Pancreas (tissue), 10 donors: ENCODE measurements at regions of chr13 and their contacts with region 1.

Region 1: GRCh38 chr13:30581582-30581981 is 36.1 kb upstream of the USPL1 start:
- DNase-seq: no peak
- ATAC-seq: peak; percentile 11 to 53 (median 34)
- H3K4me3 ChIP-seq: no peak overlapping the region
- H3K27ac ChIP-seq: no peak overlapping the region
- H3K4me1 ChIP-seq: peaks cover 4 to 12% (median 8%) of the 10 kb centered on the region in 3 donors
- H3K27me3 ChIP-seq: no peaks in the 10 kb centered on the region
- CTCF ChIP-seq: no peak

Region 2: GRCh38 chr13:30125422-30126073 is 456.0 kb before region 1 on chr13:
- intact Hi-C with region 1: loop called in 1 of 3 experiments (anchors 10 kb)
- DNase-seq: no peak
- ATAC-seq: peak in 3 of 4 donors; percentile 76 to 78 (median 77)
- H3K4me3 ChIP-seq: no peak overlapping the region
- H3K27ac ChIP-seq: no peak overlapping the region
- H3K4me1 ChIP-seq: no peaks in the 10 kb centered on the region
- H3K27me3 ChIP-seq: no peaks in the 10 kb centered on the region
- CTCF ChIP-seq: no peak

Region 3: GRCh38 chr13:32153056-32153455 is 1571.5 kb after region 1 on chr13:
- intact Hi-C with region 1: no loop called
- DNase-seq: no peak
- ATAC-seq: no peak
- H3K4me3 ChIP-seq: no peak overlapping the region
- H3K27ac ChIP-seq: no peak overlapping the region
- H3K4me1 ChIP-seq: no peaks in the 10 kb centered on the region
- H3K27me3 ChIP-seq: no peaks in the 10 kb centered on the region
- CTCF ChIP-seq: no peak